ENCODE measurements at regions of chr1 and their contacts with region 1.

Region 1: GRCh38 chr1:155454096-155454495 is 108.5 kb downstream of the ASH1L start:
- DNase-seq: no peak
- ATAC-seq: no peak
- H3K4me3 Mint-ChIP-seq: no peak overlapping the region
- H3K27ac Mint-ChIP-seq: no peak overlapping the region
- H3K4me1 Mint-ChIP-seq: no peaks in the 10 kb centered on the region
- H3K27me3 Mint-ChIP-seq: no peaks in the 10 kb centered on the region
- CTCF ChIP-seq: no peak

Region 2: GRCh38 chr1:155261852-155262673 is 192.0 kb before region 1 on chr1 and contains the start of gene SCAMP3:
- CTCF ChIA-PET with region 1: no interaction called
- POLR2A ChIA-PET with region 1: no interaction called
- intact Hi-C with region 1: no loop called
- DNase-seq: peak; percentile 71
- ATAC-seq: peak; percentile 95
- H3K4me3 Mint-ChIP-seq: peak within 1 kb of the TSS; percentile 98
- H3K27ac Mint-ChIP-seq: peak within 1 kb of the TSS; percentile 92
- H3K4me1 Mint-ChIP-seq: peaks cover 33% of the 10 kb centered on the region
- H3K27me3 Mint-ChIP-seq: no peaks in the 10 kb centered on the region
- CTCF ChIP-seq: no peak
- total RNA-seq, gene SCAMP3: 71.8 and 78.6 TPM in 2 replicates

Region 3: DNA sequence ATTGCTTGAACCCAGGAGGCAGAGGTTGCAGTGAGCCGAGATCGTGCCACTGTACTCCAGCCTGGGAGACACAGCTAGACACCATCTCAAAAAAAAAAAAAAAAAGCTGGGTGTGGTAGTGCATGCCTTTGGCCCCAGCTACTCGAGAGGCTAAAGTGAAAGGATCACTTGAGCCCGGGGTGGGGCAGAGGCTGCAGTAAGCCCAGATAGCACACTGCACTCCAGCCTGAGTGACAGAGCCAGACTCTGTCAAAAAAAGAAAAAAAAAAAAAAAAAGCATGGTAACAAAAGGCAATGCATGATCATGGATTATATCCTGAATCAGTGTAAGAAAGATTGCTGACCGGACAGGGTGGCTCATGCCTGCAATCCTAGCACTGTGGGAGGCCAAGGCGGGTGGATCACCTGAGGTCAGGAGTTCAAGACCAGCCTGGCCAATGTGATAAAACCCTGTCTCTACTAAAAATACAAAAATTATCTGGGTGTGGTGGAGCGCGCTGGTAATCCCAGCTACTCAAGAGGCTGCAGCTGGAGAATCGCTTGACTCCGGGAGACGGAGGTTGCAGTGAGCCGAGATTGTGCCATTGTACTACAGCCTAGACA is 57.1 kb before region 1 on chr1:
- CTCF ChIA-PET with region 1: no interaction called
- POLR2A ChIA-PET with region 1: no interaction called
- intact Hi-C with region 1: loop called (anchors 5 kb)
- DNase-seq: no peak
- ATAC-seq: no peak
- H3K4me3 Mint-ChIP-seq: no peak overlapping the region
- H3K27ac Mint-ChIP-seq: no peak overlapping the region
- H3K4me1 Mint-ChIP-seq: no peaks in the 10 kb centered on the region
- H3K27me3 Mint-ChIP-seq: no peaks in the 10 kb centered on the region
- CTCF ChIP-seq: no peak

Region 4: GRCh38 chr1:155437405-155437804 is 16.7 kb before region 1 on chr1:
- CTCF ChIA-PET with region 1: no interaction called
- POLR2A ChIA-PET with region 1: no interaction called
- intact Hi-C with region 1: no loop called
- DNase-seq: no peak
- ATAC-seq: no peak
- H3K4me3 Mint-ChIP-seq: no peak overlapping the region
- H3K27ac Mint-ChIP-seq: no peak overlapping the region
- H3K4me1 Mint-ChIP-seq: peaks cover 2% of the 10 kb centered on the region
- H3K27me3 Mint-ChIP-seq: no peaks in the 10 kb centered on the region
- CTCF ChIP-seq: no peak

Measured in activated B cell treated with CpG ODN at 0.5 μM for 24 hours (primary cell).